A673 (cell line): ENCODE measurements at regions of chr3 and their contacts with region 1.

Region 1: DNA sequence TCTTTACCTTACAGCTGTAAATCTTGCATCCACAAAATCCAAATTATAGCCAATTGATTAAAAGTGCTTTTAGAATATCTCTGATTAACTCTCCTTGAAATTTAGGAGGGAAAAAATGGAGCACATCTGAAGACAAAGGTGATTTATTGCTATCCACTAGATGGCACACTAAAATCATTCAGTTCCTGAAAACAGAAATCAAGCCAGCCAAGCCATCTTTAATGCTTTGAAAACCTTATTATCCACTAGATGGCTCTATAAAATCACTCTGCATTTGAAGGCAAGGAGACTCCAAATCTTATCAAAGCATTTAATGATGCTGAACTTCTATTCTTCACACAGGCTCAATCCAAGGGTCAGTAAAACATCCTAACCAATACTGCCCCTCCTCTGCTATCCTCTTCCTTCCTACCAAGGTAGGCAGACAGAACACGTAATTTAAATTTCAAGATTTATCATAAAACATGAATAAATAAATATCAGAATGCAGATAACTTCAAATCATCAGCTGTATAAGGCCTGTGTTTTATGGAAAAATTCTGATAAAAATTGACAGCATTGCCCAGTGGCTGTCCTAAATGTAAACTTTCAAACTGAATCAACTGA is 48.4 kb downstream of the GOLIM4 start:
- DNase-seq: peak; percentile 88
- H3K4me3 ChIP-seq: no peak overlapping the region
- H3K27ac ChIP-seq: no peak overlapping the region
- H3K4me1 ChIP-seq: no peaks in the 10 kb centered on the region
- H3K27me3 ChIP-seq: no peaks in the 10 kb centered on the region
- CTCF ChIP-seq: peak; percentile 90

Region 2: DNA sequence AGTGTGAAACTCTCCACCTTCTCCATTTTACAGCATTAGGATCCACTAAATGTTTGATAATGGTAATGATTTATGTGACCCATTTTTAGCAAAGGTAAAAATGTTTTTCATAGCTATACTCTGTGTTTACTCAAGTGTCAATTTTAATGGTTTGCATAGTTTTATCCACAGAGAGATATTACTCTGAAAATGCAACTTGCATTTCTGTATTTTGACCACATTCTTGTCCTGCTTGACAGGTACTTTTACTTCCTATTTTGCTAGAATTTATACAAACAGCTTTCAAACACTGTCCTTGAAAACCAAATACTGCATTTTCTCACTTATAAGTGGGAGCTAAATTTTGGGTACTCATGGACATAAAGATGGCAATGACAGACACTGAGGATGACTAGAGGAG is 248.8 kb before region 1 on chr3:
- CTCF ChIA-PET with region 1: no interaction called
- POLR2A ChIA-PET with region 1: no interaction called
- intact Hi-C with region 1: no loop called
- DNase-seq: no peak
- H3K4me3 ChIP-seq: no peak overlapping the region
- H3K27ac ChIP-seq: no peak overlapping the region
- H3K4me1 ChIP-seq: no peaks in the 10 kb centered on the region
- H3K27me3 ChIP-seq: no peaks in the 10 kb centered on the region
- CTCF ChIP-seq: no peak

Region 3: GRCh38 chr3:168156479-168156878 is 109.2 kb after region 1 on chr3:
- CTCF ChIA-PET with region 1: interaction called, 11 read pairs
- POLR2A ChIA-PET with region 1: no interaction called
- intact Hi-C with region 1: no loop called
- DNase-seq: no peak
- H3K4me3 ChIP-seq: no peak overlapping the region
- H3K27ac ChIP-seq: no peak overlapping the region
- H3K4me1 ChIP-seq: no peaks in the 10 kb centered on the region
- H3K27me3 ChIP-seq: peaks cover 4% of the 10 kb centered on the region
- CTCF ChIP-seq: no peak

Region 4: DNA sequence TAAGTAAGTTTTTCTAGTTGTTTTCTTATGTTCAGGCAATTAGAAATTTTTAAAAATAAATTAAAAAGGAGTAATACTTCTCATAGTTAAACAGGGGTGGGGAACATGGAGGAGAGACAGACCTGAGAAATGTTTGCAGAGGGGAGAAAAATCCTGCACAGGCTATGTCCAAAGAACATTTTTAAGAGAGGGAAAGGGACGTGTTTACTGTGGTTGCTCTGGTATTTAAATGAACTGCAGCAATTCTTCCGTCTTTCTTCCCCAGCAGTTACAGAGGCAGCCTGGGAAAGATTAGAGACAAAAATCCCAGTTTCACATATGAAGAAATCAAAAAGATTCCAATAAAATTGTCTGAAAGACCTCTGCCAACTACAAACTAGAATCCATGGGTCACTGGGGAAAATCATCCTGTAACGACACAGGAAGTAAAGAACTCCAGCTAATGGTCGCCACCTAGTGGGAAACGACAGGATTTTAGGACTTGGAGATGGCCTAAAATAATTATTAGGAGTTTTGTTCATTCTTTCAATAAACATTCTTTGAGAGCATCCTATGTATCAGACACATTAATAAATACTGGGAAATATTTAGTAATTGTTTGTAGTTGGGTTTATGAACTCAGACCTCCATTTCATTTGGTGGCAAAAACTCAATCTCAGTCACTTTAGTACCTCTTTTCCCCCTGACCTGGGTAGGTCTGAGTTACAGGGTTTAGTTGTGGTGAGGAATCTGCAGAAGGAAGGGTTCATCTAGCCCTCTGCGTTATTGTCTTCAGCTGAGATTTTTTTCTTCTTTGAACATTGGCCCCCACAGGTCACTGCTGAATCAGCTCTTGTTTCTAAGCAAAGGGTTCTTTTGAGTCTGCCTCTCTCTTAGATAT is 118.3 kb after region 1 on chr3:
- CTCF ChIA-PET with region 1: interaction called, 3 read pairs
- POLR2A ChIA-PET with region 1: no interaction called
- intact Hi-C with region 1: loop called (anchors 1 kb)
- DNase-seq: peak; percentile 72
- H3K4me3 ChIP-seq: no peak overlapping the region
- H3K27ac ChIP-seq: no peak overlapping the region
- H3K4me1 ChIP-seq: no peaks in the 10 kb centered on the region
- H3K27me3 ChIP-seq: no peaks in the 10 kb centered on the region
- CTCF ChIP-seq: peak; percentile 76

Region 5: GRCh38 chr3:168511428-168512014 is 464.2 kb after region 1 on chr3:
- CTCF ChIA-PET with region 1: no interaction called
- POLR2A ChIA-PET with region 1: no interaction called
- intact Hi-C with region 1: loop called (anchors 10 kb)
- DNase-seq: peak; percentile 12
- H3K4me3 ChIP-seq: no peak overlapping the region
- H3K27ac ChIP-seq: no peak overlapping the region
- H3K4me1 ChIP-seq: no peaks in the 10 kb centered on the region
- H3K27me3 ChIP-seq: peaks cover 23% of the 10 kb centered on the region
- CTCF ChIP-seq: peak; percentile 59

Region 6: DNA sequence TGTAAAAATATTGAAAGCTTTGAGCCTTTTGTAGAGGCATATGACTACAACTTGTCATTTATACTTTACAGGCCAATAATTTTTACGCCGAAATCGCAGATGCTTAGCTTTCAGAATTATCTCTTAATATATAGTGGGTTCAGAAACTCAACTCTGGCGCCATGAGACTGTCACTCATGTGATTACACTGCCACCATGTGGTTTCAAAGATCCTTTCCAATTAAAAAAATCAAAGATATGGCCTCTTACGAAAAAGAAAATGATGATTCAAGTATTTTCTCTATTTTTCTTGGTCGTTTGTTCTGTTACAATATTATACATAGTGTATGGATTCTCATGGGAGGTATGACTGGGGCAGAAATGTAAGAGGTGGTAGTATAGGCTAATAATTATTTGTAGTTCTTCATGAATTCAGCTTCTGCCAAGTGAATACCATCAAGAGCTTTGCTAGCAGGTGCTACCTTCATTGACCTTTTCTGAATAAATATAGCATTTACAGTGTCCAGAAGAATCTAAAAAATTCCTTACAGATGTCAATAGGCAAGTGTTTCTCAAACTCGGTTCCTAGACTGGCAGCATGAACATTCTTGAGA is 800.1 kb after region 1 on chr3:
- CTCF ChIA-PET with region 1: no interaction called
- POLR2A ChIA-PET with region 1: no interaction called
- intact Hi-C with region 1: loop called (anchors 5 kb)
- DNase-seq: peak; percentile 53
- H3K4me3 ChIP-seq: no peak overlapping the region
- H3K27ac ChIP-seq: no peak overlapping the region
- H3K4me1 ChIP-seq: no peaks in the 10 kb centered on the region
- H3K27me3 ChIP-seq: peaks cover 48% of the 10 kb centered on the region
- CTCF ChIP-seq: peak; percentile 68